ENCODE measurements at regions of chr14 and their contacts with region 1.

Region 1: DNA sequence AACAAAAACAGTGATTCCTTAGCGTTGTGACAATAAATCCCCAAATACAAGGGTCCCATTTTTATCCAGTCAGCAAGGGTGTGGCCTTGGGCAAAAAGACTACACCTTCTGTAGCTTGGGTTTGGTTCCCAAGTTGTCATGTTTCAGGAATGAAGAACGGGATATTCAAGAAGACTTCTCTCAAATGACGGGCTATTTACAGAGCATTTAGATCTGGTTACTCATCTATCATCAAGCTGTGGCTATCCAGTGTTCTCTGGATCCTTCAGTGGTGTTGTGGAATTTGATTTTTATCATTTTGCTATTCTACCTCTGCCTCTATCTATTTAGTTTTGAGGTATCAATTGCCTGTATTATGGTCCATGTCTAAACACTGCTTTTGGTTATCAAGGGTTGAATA is 219.7 kb downstream of the SLC25A21 start:
- DNase-seq: peak; percentile 35
- H3K4me3 Mint-ChIP-seq: no peak overlapping the region
- H3K27ac Mint-ChIP-seq: peak overlapping the region; percentile 74
- H3K4me1 Mint-ChIP-seq: peaks cover 12% of the 10 kb centered on the region
- H3K27me3 Mint-ChIP-seq: no peaks in the 10 kb centered on the region
- CTCF ChIP-seq: no peak

Region 2: DNA sequence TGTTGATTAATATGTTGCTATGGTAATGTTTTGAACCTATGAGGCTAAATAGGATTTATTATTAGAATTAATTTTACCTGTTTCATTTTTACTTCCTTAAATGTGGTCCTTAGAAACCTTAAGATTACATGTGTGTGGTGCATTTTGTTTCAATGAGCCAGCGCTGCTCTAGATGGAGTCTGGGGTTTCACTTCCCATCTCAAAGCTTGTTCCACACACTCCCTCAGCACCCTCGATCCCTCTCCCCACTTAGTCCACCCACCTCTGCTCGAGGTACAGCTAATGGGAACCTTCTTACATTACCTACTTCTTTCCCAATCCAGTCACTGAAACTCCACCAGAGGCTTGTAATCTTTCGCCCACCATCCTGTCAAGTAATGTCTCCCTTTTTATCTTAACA is 85.8 kb before region 1 on chr14:
- CTCF ChIA-PET with region 1: no interaction called
- POLR2A ChIA-PET with region 1: no interaction called
- intact Hi-C with region 1: no loop called
- DNase-seq: no peak
- H3K4me3 Mint-ChIP-seq: no peak overlapping the region
- H3K27ac Mint-ChIP-seq: no peak overlapping the region
- H3K4me1 Mint-ChIP-seq: no peaks in the 10 kb centered on the region
- H3K27me3 Mint-ChIP-seq: no peaks in the 10 kb centered on the region
- CTCF ChIP-seq: no peak

Region 3: DNA sequence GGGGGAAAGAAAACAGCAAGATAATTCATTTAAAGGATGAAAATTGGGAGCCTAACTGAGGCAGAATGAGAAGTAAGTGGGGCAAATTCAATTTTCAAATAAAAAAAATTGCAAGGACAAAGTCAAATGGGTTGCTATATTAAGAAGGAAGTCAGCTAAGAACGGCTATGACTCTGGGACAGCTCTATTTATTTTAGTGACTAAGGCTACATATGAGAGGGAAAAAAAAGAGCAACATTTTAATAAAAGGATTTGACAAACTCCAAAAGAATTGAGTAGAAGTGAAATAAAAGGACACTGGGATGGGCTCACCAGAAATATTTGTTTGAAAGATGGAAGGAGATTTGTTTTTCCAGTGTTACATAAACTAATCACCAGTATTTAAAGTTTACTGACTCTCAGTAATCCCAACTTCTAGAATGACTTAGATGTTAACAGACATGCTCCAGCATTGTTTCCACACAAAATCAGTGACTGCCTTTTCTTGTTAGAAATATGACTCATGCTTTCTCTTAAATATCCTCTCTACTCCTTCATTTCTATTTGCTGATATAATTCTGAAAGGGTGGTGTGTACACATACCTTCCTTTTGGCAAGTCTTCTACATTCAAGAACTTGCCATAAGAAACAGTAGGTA is 21.2 kb after region 1 on chr14:
- CTCF ChIA-PET with region 1: interaction called, 4 read pairs
- POLR2A ChIA-PET with region 1: interaction called, 12 read pairs
- intact Hi-C with region 1: no loop called
- DNase-seq: peak; percentile 69
- H3K4me3 Mint-ChIP-seq: no peak overlapping the region
- H3K27ac Mint-ChIP-seq: peak overlapping the region; percentile 90
- H3K4me1 Mint-ChIP-seq: peaks cover 44% of the 10 kb centered on the region
- H3K27me3 Mint-ChIP-seq: no peaks in the 10 kb centered on the region
- CTCF ChIP-seq: no peak

Measured in MCF 10A (cell line).